ENCODE measurements at regions of chr7 and their contacts with region 1.

Region 1: DNA sequence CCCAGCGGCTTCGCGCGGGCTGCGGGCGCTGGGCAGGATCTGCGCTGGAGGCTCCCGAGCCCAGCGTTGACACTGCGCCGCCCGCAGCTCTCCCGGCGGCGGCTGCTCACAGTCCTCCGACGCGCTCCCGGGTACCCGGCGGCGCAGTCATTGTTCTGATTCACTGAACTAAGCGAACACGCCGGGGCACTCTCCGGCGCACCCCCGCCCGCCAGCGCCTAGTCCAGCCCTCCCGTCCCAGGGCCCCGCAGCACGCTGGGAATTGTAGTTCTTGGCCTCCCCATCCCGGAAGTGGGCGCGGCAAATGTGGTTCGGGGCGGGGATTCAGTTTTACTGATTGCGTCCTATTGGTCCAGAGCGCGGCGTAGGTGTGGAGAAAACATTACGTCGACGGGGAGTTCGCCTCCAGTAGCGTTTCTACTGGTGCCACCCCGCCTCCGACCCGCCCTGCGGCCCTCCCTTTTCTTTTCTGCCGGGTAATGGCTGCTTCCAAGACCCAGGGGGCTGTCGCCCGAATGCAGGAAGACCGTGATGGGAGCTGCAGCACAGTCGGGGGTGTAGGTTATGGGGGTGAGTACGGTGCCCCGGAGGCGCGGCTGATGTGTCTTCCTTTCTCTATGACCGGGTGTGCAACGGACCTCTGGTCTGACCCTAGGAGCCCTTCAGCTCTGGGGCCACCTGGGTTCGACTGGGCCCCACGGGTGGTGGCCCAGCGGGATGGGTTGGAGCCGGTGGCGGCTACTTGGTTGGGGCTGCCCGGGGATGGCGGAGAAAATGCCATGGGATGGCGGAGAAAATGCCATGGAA is at the starts of genes DOCK4 and ZNF277:
- DNase-seq: peak; percentile 99
- ATAC-seq: peak; percentile 90
- H3K4me3 Mint-ChIP-seq: peak within 1 kb of the TSS; percentile 97
- H3K27ac Mint-ChIP-seq: peak within 1 kb of the TSS; percentile 83
- H3K4me1 Mint-ChIP-seq: peaks cover 37% of the 10 kb centered on the region
- H3K27me3 Mint-ChIP-seq: peaks cover 25% of the 10 kb centered on the region
- CTCF ChIP-seq: no peak
- total RNA-seq, gene DOCK4: 0.61 and 0.73 TPM in 2 replicates
- total RNA-seq, gene ZNF277: 12.6 and 13.1 TPM in 2 replicates

Region 2: GRCh38 chr7:112386619-112387018 is 180.2 kb after region 1 on chr7:
- CTCF ChIA-PET with region 1: no interaction called
- POLR2A ChIA-PET with region 1: no interaction called
- intact Hi-C with region 1: loop called (anchors 1 kb)
- DNase-seq: no peak
- ATAC-seq: no peak
- H3K4me3 Mint-ChIP-seq: no peak overlapping the region
- H3K27ac Mint-ChIP-seq: no peak overlapping the region
- H3K4me1 Mint-ChIP-seq: peaks cover 5% of the 10 kb centered on the region
- H3K27me3 Mint-ChIP-seq: peaks cover 5% of the 10 kb centered on the region
- CTCF ChIP-seq: no peak